AG04450 (cell line): ENCODE measurements at regions of chr18 and their contacts with region 1.

Region 1: GRCh38 chr18:629269-630150 is 27.9 kb upstream of the TYMS start:
- DNase-seq: no peak
- H3K4me3 ChIP-seq: no peak overlapping the region
- H3K27ac ChIP-seq: no peak overlapping the region
- H3K27me3 ChIP-seq: peaks cover 14% of the 10 kb centered on the region
- CTCF ChIP-seq: 0 out of 2 replicates have a peak, but pooled peaks have one; percentile 21

Region 2: GRCh38 chr18:658001-658946 is 28.8 kb after region 1 on chr18:
- CTCF ChIA-PET with region 1: interaction called, 4 read pairs
- POLR2A ChIA-PET with region 1: interaction called, 13 read pairs
- DNase-seq: peak; percentile 50
- H3K4me3 ChIP-seq: peak overlapping the region; percentile 89
- H3K27ac ChIP-seq: peak overlapping the region; percentile 61
- H3K27me3 ChIP-seq: no peaks in the 10 kb centered on the region
- CTCF ChIP-seq: 0 out of 2 replicates have a peak, but pooled peaks have one; percentile 1